Pancreas (tissue), 10 donors: ENCODE measurements at regions of chr4 and their contacts with region 1.

Region 1: DNA sequence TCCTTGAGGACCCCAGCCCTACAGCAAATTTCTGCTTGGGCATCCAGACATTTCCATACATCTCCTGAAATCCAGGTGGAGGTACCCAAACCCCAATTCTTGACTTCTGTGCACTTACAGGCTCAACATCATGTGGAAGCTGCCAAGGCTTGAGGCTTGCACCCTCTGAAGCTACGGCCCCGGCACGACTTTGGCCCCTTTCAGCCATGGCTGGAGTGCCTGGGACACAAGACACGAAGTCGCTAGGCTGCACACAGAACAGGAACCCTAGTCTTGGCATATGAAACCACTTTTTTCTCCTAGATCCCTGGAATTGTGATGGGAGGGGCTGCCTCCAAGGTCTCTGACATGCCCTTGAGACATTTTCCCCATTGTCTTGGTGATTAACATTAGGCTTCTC is 1417.7 kb downstream of the ARAP2 start:
- DNase-seq: no peak
- ATAC-seq: no peak
- H3K4me3 ChIP-seq: no peak overlapping the region
- H3K27ac ChIP-seq: no peak overlapping the region
- H3K4me1 ChIP-seq: no peaks in the 10 kb centered on the region
- H3K27me3 ChIP-seq: no peaks in the 10 kb centered on the region
- CTCF ChIP-seq: no peak

Region 2: GRCh38 chr4:34709564-34709963 is 117.1 kb before region 1 on chr4:
- intact Hi-C with region 1: no loop called
- DNase-seq: no peak
- ATAC-seq: no peak
- H3K4me3 ChIP-seq: no peak overlapping the region
- H3K27ac ChIP-seq: no peak overlapping the region
- H3K4me1 ChIP-seq: no peaks in the 10 kb centered on the region
- H3K27me3 ChIP-seq: no peaks in the 10 kb centered on the region
- CTCF ChIP-seq: no peak

Region 3: DNA sequence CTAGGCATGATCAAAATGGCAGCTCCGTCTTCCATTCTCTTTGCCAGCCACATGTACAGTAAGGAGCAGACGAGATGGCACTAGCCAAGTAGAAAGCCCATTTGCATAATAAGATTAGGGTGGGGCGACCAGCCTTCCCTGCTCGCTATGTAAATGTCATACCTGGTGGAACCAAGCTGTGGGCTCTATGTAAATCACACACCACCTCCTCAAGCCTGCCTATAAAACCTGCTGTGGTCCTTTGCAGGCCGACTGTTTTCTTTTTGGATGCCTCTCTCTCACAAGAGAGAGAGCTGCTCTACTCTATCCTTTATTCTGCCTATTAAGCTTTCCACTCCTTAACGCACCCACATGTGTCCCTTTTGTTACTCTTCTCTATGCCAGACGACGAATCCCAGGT is 55.0 kb before region 1 on chr4:
- intact Hi-C with region 1: loop called in 1 of 3 experiments (anchors 2 kb)
- DNase-seq: no peak
- ATAC-seq: no peak
- H3K4me3 ChIP-seq: no peak overlapping the region
- H3K27ac ChIP-seq: no peak overlapping the region
- H3K4me1 ChIP-seq: no peaks in the 10 kb centered on the region
- H3K27me3 ChIP-seq: peaks cover 0 to 3% (median 0%) of the 10 kb centered on the region in 4 donors
- CTCF ChIP-seq: no peak